WTC11 (cell line): ENCODE measurements at regions of chr2 and their contacts with region 1.

Region 1: DNA sequence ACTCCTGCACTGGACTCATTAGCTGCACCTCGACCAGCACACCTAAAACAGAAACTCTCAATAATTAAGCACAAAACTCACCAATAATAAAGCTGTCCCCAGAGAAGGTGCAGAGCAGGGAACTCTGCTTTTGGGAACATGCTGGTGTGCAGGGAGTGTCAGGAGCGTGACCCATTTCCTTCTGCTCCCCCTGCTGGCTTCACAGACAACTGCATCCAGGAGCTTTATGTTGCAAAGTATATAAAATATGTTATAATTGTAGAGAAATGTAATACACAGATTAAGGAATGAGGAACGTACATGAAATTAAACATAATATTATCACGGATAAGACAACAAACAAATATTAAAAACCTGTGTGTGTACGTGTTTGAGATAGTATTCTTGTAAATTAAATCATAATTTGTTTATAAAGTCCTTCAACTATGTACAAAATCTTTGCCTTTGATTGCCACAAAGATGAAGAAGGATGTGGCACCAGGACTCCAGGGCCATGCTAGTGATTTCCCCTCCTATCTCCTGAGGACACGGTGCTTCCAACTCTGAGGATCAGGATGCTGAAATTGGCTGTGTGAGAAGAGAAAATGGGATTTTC is 68.6 kb upstream of the MAL start:
- DNase-seq: peak; percentile 54
- ATAC-seq: peak; percentile 74
- H3K4me3 Mint-ChIP-seq: no peak overlapping the region
- H3K27ac Mint-ChIP-seq: no peak overlapping the region
- H3K4me1 Mint-ChIP-seq: peaks cover 15% of the 10 kb centered on the region
- H3K27me3 Mint-ChIP-seq: peaks cover 4% of the 10 kb centered on the region; the same call in 1 of the 2 replicates
- CTCF ChIP-seq: peak; percentile 80

Region 2: DNA sequence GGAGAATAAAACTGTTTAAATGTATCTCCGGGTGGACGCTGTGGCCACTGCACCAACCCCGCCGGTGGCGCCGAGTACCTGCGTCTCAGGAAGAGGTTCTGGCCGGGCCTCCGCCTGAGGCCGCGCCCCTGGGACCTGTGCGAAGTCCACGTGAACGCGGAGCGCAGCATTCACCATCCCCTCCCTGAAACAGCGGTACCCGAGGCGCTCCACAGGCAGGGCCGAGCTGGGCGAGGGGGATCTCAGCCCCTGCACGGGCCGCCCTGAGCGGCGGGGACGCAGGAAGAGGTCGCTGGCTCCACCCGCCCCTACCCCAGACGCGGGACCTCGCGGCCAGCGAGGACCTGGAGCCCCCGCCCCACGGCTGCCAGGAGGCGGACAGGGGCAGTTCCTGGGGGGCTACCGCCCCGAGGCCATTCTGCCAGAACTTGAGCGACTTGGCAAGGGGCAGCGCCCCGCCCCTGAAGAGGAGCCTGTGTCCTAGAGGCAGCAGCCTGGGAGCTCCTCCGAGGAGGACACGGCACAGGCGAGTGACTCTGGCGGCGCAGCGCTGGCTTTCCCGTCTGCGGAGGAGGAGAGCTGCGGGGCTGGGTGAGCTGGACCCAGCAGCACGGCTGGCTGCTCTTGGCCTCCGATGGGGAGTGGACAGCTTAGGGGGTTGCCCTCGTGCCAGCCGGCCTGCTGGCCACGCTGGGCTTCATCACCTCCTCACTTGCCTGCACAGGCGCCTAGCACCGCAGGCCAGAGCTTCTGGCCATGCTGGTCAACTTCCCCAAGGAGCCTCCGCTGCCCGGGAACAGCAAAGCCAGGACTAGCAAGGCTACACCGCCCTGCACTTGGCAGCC is 95.4 kb before region 1 on chr2:
- CTCF ChIA-PET with region 1: interaction called, 11 read pairs
- POLR2A ChIA-PET with region 1: no interaction called
- DNase-seq: peak; percentile 62
- ATAC-seq: peak; percentile 83
- H3K4me3 Mint-ChIP-seq: peak overlapping the region; percentile 60
- H3K27ac Mint-ChIP-seq: no peak overlapping the region
- H3K4me1 Mint-ChIP-seq: no peaks in the 10 kb centered on the region; the same call in 1 of the 2 replicates
- H3K27me3 Mint-ChIP-seq: peaks cover 77% of the 10 kb centered on the region
- CTCF ChIP-seq: no peak

Region 3: DNA sequence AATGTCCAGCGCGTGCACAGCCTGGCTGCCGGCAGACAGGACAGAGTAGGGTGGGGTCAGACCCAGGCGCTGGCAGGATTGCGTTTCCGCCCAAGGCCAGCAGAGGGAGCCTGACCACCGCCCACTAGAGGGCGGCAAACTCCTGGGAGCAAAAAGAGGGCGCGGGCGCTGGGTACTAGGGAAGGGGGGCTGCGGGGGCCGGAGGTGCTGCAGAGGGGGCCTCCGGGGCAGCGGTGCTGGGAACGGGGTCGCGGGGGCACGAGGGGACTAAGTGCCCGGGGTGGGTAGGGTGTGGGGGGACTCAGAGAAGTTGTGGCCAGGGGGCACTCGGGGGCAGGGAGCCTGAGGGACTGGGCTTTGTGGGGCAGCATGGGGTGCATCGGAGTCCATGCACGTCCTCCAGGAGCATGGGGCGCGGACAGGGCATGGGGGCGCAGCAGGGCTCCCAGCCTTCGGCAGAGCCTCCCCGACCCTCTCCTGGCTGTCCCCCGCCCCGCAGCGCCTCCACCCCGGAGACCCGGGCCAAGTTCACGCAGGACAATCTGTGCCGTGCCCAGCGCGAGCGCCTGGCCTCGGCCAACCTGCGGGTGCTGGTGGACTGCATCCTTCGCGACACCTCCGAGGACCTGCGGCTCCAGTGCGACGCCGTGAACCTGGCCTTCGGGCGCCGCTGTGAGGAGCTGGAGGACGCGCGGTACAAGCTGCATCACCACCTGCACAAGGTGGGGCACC is 82.5 kb before region 1 on chr2:
- CTCF ChIA-PET with region 1: interaction called, 92 read pairs
- POLR2A ChIA-PET with region 1: no interaction called
- DNase-seq: peak; percentile 92
- ATAC-seq: peak; percentile 80
- H3K4me3 Mint-ChIP-seq: peak overlapping the region; percentile 49
- H3K27ac Mint-ChIP-seq: no peak overlapping the region
- H3K4me1 Mint-ChIP-seq: peaks cover 10% of the 10 kb centered on the region
- H3K27me3 Mint-ChIP-seq: peaks cover 40% of the 10 kb centered on the region
- CTCF ChIP-seq: peak; percentile 83

Region 4: DNA sequence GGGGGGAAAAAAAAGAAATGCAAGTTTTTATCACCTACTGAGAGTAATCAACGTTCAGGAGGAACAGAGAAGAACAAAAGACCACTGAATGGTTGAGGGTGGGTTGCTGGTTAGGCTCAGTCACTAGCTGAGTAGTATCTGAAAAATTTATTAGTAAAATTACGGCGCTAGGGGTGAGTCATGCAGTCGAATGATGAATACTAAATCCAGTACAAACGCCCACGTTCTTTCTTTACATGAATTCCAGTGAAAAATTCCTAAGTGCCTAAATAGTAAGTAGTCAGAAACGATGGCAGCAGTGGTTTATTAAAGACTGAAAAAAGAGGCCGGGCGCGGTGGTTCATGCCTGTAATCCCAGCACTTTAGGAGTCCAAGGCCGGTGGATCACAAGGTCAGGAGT is 33.7 kb before region 1 on chr2:
- CTCF ChIA-PET with region 1: no interaction called
- POLR2A ChIA-PET with region 1: no interaction called
- DNase-seq: no peak
- ATAC-seq: no peak
- H3K4me3 Mint-ChIP-seq: no peak overlapping the region
- H3K27ac Mint-ChIP-seq: no peak overlapping the region
- H3K4me1 Mint-ChIP-seq: no peaks in the 10 kb centered on the region
- H3K27me3 Mint-ChIP-seq: peaks cover 8% of the 10 kb centered on the region
- CTCF ChIP-seq: no peak

Region 5: GRCh38 chr2:94970353-94970752 is 13.5 kb after region 1 on chr2:
- CTCF ChIA-PET with region 1: interaction called, 14 read pairs
- POLR2A ChIA-PET with region 1: interaction called, 3 read pairs
- DNase-seq: no peak
- ATAC-seq: no peak
- H3K4me3 Mint-ChIP-seq: no peak overlapping the region
- H3K27ac Mint-ChIP-seq: no peak overlapping the region
- H3K4me1 Mint-ChIP-seq: peaks cover 11% of the 10 kb centered on the region
- H3K27me3 Mint-ChIP-seq: no peaks in the 10 kb centered on the region
- CTCF ChIP-seq: no peak

Region 6: DNA sequence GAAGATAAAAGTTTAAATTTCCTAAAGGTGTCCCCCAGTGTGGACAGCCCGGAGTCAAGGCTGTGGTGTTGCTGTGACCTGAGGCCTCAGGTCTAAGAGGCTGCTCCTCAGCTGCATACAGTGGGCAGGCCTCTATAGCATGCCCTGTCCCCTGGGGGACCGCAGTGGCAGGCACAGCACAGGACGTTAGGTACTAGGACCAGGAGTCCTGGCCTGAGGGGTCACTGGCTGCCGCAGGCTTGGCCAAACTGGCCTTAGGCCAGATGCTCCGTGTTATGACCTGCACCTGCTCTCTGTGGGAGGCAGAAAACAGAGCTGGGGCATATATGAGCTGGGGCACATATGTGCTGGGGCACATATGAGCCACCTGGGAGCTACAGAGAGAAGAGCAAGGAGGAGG is 47.4 kb after region 1 on chr2:
- CTCF ChIA-PET with region 1: no interaction called
- POLR2A ChIA-PET with region 1: no interaction called
- DNase-seq: no peak
- ATAC-seq: no peak; the same call in 1 of the 2 replicates
- H3K4me3 Mint-ChIP-seq: no peak overlapping the region
- H3K27ac Mint-ChIP-seq: no peak overlapping the region
- H3K4me1 Mint-ChIP-seq: peaks cover 14% of the 10 kb centered on the region
- H3K27me3 Mint-ChIP-seq: no peaks in the 10 kb centered on the region
- CTCF ChIP-seq: no peak

Region 7: GRCh38 chr2:95062242-95063085 is 105.6 kb after region 1 on chr2:
- CTCF ChIA-PET with region 1: interaction called, 14 read pairs
- POLR2A ChIA-PET with region 1: no interaction called
- DNase-seq: no peak
- ATAC-seq: peak; percentile 74
- H3K4me3 Mint-ChIP-seq: no peak overlapping the region
- H3K27ac Mint-ChIP-seq: no peak overlapping the region
- H3K4me1 Mint-ChIP-seq: peaks cover 22% of the 10 kb centered on the region
- H3K27me3 Mint-ChIP-seq: no peaks in the 10 kb centered on the region; the same call in 1 of the 2 replicates
- CTCF ChIP-seq: no peak